A549 (cell line): ENCODE measurements at regions of chr1 and their contacts with region 1.

Region 1: GRCh38 chr1:145927063-145927886 is at the start of gene RBM8A:
- DNase-seq: peak; percentile 86 to 99
- ATAC-seq: peak; percentile 98
- H3K4me3 ChIP-seq: peak within 1 kb of the TSS; percentile 84
- H3K27ac ChIP-seq: peak within 1 kb of the TSS; percentile 97
- H3K4me1 ChIP-seq: peaks cover 10% of the 10 kb centered on the region; the same call in 2 of the 3 replicates
- CTCF ChIP-seq: peak; percentile 60
- EP300 ChIP-seq: no peak
- POLR2A ChIP-seq: peak; percentile 92
- RAD21 ChIP-seq: peak; percentile 15 to 20; a peak in 1 of 5 replicates
- polyA plus RNA-seq, gene RBM8A: 152 and 281 TPM in 2 replicates

Region 2: GRCh38 chr1:145706086-145706680 is 221.1 kb before region 1 on chr1:
- CTCF ChIA-PET with region 1: no interaction called
- POLR2A ChIA-PET with region 1: no interaction called
- DNase-seq: peak; percentile 55 to 84
- ATAC-seq: peak; percentile 79 to 81
- H3K4me3 ChIP-seq: no peak overlapping the region
- H3K27ac ChIP-seq: peak overlapping the region; percentile 56 to 78; a peak in 5 of 6 replicates
- H3K4me1 ChIP-seq: peaks cover 40% of the 10 kb centered on the region
- CTCF ChIP-seq: no peak
- EP300 ChIP-seq: no peak
- POLR2A ChIP-seq: no peak
- RAD21 ChIP-seq: no peak

Region 3: DNA sequence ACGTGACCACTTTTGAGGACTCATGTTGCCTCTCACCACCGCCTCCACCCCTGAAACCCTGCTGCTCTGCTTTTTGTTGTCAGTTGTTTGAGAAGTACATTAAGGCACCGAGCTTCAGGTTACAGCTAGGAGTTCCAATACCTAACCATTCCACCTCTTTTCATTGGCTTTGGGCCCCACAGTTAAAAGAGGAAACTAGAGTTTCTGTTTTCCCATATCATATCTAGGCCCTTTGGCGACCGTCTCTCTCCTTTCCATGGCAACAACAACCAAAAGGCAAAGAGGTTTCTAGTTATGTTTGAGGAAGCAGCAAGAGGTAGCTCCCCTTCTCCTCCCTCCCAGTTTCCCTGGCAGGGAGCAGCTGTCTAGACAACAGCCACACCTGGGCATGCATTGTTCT is 47.5 kb before region 1 on chr1:
- CTCF ChIA-PET with region 1: interaction called, 10 read pairs
- POLR2A ChIA-PET with region 1: no interaction called
- DNase-seq: no peak
- ATAC-seq: no peak
- H3K4me3 ChIP-seq: no peak overlapping the region
- H3K27ac ChIP-seq: no peak overlapping the region
- H3K4me1 ChIP-seq: peaks cover 10% of the 10 kb centered on the region; the same call in 1 of the 3 replicates
- CTCF ChIP-seq: no peak
- EP300 ChIP-seq: no peak
- POLR2A ChIP-seq: no peak
- RAD21 ChIP-seq: no peak

Region 4: DNA sequence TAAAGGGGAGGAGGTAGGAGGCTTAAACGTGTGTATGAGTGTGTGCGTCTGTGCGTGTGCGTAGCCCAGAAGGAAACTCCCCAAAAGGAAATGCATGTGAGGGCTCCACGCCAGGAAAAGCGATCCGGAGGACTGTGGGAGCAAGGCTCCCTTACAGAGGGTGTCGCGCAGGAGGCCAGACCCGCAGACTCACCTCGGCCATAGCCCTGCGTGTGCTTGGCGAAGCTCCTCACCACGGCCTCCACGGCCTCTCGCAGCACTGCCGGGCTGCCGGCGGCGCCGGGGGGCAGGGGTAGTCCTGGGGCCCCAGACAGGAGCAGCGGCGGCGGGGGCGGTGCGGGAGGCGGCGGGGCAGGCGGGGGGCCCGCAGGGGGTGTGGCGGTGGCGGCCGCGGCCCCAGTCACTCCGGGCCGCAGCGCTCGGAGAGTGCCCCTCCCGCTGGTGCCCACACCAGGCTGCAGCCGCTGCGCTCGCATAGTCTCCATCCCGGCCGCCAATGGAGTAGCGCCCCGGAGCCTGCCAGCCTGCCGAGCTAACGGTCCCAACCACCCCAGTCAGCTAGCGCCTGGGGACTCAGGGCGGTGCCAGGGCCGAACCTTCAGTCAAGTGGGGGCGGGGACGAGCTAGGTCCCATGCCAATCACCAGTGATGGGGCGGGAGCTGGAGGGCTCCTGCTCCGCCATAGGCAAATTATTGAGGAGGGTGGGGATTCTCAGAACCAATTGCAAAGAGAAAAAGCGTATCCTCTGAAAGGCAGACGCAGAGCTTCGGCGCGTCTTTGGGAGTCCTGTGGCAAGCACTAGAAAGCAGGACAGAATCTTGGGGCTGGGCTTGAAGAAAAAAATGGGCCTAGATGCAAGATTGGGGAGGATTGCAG is 30.4 kb after region 1 on chr1 and contains the start of gene LIX1L:
- CTCF ChIA-PET with region 1: interaction called, 18 read pairs
- POLR2A ChIA-PET with region 1: interaction called, 62 read pairs
- DNase-seq: peak; percentile 95 to 97
- ATAC-seq: peak; percentile 82 to 89
- H3K4me3 ChIP-seq: peak within 1 kb of the TSS; percentile 68
- H3K27ac ChIP-seq: peak within 1 kb of the TSS; percentile 91 to 97
- H3K4me1 ChIP-seq: peaks cover 42% of the 10 kb centered on the region
- CTCF ChIP-seq: no peak
- EP300 ChIP-seq: no peak
- POLR2A ChIP-seq: peak; percentile 66
- RAD21 ChIP-seq: no peak
- polyA plus RNA-seq, gene LIX1L: 33.0 and 35.8 TPM in 2 replicates

Region 5: DNA sequence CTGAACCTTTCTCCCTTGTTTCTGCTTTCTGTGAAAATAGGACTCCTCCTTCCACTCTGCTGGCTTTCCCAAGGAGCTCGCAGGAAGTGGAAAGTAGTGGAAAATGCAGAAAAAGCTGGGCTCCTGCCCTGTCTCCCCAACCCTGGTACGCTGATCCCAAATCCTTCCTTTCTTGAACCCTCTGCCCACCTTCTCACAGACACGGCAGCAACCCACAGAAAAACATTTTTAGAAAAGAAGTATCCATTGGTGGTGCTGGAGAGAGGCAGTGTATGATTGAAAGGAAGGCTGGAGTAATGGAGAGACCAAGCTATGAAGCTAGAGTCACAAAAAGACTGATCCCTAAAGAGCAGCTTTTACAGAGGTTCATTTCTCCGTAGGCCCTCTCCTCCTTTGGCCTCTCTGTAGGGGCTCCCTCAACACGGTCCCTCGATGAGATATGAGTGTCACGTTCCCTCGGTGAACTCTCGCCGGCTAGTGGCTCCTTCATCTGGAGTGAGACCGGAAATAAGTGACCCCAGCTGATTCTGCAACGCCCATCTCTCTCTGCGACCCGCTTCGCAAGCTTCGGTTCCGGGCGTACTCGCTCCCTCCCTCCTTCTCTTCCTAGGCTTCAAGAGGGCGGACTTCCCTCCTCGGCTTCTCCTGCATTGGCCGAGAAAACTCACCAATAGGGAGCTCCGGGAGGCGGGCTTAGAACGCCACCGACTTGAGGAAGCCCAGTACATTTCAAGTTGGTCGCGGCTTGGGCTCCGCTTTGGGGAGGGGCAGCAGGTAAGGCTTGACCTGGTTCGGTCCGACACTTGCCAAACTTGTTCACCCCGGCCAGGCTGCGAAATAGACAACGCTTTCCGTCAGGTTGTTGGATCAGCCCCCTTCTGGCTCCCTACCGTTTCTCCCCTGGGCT is 37.0 kb after region 1 on chr1 and contains the starts of genes ANKRD34A and POLR3GL:
- CTCF ChIA-PET with region 1: interaction called, 18 read pairs
- POLR2A ChIA-PET with region 1: interaction called, 62 read pairs
- DNase-seq: peak; percentile 93 to 95
- ATAC-seq: peak; percentile 84 to 92
- H3K4me3 ChIP-seq: peak within 1 kb of the TSS; percentile 55
- H3K27ac ChIP-seq: peak within 1 kb of the TSS; percentile 78 to 87
- H3K4me1 ChIP-seq: peaks cover 39% of the 10 kb centered on the region
- CTCF ChIP-seq: no peak
- EP300 ChIP-seq: no peak
- POLR2A ChIP-seq: peak; percentile 79
- RAD21 ChIP-seq: no peak
- polyA plus RNA-seq, gene ANKRD34A: 0.30 and 0.34 TPM in 2 replicates
- polyA plus RNA-seq, gene POLR3GL: 11.0 and 15.7 TPM in 2 replicates